AG04449 (cell line): ENCODE measurements at regions of chr22 and their contacts with region 1.

Region 1: DNA sequence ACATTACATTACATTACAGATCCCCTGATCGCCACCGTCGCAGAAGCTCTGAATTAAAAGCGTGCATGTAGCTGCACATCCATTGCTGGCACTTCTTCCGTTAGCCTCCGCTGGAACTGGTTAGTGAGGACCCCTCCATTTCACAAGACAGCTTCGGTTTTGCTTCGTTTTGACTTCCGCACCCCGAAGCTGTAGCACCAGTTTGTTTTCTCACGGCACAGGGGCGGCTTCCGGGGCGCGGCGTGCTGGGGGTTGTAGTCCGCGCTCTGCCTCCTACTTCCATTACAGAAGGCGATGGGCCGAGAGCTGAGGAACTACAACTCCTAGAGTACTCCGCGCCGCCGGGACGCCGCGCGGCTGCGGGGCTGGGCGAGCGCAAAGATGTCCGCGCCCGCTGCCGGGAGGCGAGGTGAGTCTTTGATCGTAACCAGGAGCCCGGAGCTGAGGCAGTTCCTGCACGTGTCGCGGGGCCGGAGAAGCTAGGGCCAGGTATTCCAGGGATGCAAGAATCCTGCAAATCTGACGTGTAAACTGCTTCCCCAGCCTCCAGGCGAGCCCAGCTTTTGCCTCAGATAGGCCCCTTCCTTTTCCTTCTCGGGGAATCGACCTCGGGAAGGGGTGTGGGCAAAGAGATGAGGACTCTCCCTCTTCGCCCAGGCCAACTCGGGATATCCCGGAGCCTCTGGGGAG is at the start of gene PEX26:
- DNase-seq: no peak
- H3K4me3 ChIP-seq: peak within 1 kb of the TSS; percentile 90
- CTCF ChIP-seq: no peak

Region 2: DNA sequence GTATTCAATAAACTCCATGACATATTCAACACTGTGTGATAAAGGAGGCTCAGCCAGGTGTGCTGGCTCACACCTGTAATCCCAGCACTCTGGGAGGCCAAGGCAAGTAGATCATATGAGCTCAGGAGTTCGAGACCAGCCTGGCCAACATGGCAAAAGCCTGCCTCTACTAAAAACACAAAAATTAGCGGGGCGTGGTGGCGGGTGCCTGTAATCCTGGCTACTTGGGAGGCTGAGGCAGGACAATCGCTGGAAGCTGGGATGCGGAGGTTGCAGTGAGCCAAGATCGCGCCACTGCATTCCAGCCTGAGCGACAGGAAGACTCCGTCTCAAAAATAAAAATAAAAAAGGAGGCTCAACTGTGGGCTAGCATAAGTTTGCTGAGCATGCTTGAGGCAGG is 518.6 kb before region 1 on chr22:
- CTCF ChIA-PET with region 1: interaction called, 13 read pairs
- POLR2A ChIA-PET with region 1: no interaction called
- DNase-seq: no peak
- H3K4me3 ChIP-seq: no peak overlapping the region
- CTCF ChIP-seq: no peak

Region 3: DNA sequence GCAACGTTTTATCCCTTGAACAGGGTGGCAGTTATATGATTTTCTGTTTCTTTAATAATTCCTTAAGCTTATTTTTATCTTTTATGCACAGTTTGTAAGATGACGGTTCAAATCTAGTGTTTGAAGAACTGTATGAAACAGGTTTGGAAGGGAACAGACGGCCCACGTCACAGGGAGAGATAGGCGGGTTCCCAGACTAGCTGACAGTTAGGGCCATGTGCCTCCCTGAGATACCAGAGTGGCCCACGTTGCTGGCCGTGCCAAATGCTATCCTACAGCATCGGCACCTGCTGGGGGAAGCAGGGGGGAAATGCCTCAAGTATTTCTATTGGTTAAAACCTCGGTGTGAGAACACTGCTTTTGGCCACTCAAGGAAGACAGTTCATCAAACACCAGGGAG is 253.3 kb before region 1 on chr22:
- CTCF ChIA-PET with region 1: interaction called, 454 read pairs
- POLR2A ChIA-PET with region 1: interaction called, 3 read pairs
- DNase-seq: no peak
- H3K4me3 ChIP-seq: no peak overlapping the region
- CTCF ChIP-seq: no peak

Region 4: GRCh38 chr22:17891481-17892167 is 186.2 kb before region 1 on chr22:
- CTCF ChIA-PET with region 1: interaction called, 59 read pairs
- POLR2A ChIA-PET with region 1: no interaction called
- DNase-seq: no peak
- H3K4me3 ChIP-seq: no peak overlapping the region
- CTCF ChIP-seq: peak; percentile 21

Region 5: DNA sequence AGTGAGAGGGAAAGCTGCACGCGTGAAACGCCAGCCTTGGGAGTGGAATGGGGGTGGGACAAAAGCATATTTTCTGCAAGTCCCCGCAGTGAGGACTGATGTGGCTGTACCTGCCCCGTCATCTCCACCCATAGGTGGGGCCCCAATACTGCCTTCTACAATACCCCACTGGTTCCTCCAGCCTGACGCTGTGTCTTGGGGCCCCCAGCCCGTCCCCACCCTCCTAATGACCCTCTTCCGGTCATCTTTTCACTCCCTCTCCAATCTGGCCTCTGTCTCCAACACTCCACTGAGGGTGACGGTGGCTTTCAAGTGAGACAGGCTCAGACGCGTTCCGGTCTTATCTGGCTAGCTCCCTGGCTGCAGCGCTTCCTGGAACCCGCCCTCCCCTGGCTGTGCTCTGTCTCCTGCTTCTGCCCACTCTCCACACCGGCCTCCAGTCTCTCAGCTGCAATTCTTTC is 157.6 kb before region 1 on chr22:
- CTCF ChIA-PET with region 1: interaction called, 11 read pairs
- POLR2A ChIA-PET with region 1: no interaction called
- DNase-seq: no peak
- H3K4me3 ChIP-seq: no peak overlapping the region
- CTCF ChIP-seq: no peak

Region 6: DNA sequence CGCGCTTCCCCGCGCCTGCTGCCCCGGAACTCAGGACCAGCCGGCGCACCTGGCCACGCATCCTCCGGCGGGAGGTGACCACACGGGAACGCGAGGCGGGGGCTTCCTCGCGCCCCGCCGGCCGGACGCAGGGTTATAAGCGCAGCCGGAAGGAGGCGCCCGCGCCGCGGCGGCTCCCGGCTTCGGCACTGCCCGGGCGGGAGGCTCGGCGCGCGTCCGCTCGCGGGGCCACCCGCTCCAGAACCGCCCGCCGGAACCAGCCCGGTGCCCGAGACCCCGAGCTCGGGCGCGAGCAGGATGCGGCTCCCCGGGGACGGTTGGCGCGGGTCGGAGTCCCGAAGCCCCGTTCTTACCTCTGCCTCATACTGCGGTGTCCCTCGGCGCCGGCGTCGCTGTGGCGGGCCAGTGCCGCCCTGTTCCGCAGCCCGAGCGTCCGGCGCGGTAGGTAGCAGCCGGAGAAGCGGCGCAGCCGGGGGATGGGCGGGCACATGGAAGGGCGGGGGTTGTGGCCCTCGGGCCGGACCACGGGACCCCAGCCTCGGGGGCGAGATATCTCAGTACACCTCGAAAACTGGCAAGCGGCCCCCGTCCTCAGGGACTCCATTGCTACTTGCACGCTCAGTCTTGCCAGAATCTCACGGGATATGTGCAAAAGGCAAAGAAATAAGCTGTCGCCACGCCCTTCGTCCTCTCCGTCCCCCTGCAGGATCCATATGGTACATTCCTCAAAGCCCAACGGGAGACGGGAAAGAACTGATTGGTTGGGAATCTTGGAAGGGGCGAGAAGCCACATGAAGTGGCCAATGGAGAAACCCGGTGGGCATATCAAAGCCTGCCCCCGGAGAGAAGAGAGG is 76.5 kb before region 1 on chr22:
- CTCF ChIA-PET with region 1: interaction called, 69 read pairs
- POLR2A ChIA-PET with region 1: no interaction called
- DNase-seq: peak; percentile 88
- H3K4me3 ChIP-seq: peak overlapping the region; percentile 80
- CTCF ChIP-seq: peak; percentile 62

Region 7: GRCh38 chr22:18065256-18065655 is 12.5 kb before region 1 on chr22:
- CTCF ChIA-PET with region 1: interaction called, 26 read pairs
- POLR2A ChIA-PET with region 1: interaction called, 5 read pairs
- DNase-seq: no peak
- H3K4me3 ChIP-seq: no peak overlapping the region
- CTCF ChIP-seq: no peak

Region 8: DNA sequence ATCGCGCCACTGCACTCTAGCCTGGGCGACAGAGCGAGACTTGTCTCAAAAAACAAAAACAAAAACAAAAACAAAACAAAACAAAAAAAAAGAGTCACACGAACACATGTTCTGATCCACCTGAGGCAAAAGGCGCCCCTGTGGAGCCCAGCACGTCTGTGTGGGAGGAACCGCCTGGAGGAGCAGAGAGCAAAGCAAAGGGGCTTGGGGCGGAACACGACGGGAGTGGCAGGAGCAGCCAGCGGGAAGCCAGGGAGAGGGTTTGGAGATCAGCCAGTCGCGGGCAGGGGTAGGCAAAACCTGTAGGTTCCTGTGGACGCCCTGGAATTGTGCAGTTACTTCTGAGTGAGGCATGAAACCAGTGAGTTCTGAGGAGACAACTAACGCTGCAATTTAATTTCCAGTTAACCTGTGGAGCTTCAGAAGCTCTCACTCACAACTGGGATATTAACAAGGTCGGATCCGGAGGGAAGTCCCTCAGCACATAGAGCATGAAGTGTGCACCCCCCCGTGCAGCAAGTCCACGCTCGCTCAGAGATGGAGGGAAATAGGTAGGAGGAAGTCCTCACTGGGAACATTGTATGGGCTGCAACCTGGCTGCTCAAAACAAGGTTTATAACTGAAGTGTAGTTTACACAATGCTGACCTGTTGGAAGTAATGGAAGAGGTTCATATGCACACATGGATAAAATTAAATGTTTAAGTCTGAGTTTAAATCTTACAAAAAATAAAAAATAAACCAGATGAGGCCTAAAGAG is 59.0 kb after region 1 on chr22:
- CTCF ChIA-PET with region 1: no interaction called
- POLR2A ChIA-PET with region 1: no interaction called
- DNase-seq: no peak
- H3K4me3 ChIP-seq: no peak overlapping the region
- CTCF ChIP-seq: no peak